ENCODE measurements at regions of chr1 and their contacts with region 1.

Region 1: GRCh38 chr1:145963995-145964901 is at the starts of genes ANKRD34A and POLR3GL:
- DNase-seq: peak; percentile 71 to 94 (median 89)
- ATAC-seq: peak; percentile 96
- H3K4me3 ChIP-seq: peak within 1 kb of the TSS; percentile 87
- H3K4me3 Mint-ChIP-seq: peak within 1 kb of the TSS; percentile 88 to 99 (median 96)
- H3K27ac ChIP-seq: peak within 1 kb of the TSS; percentile 84
- H3K27ac Mint-ChIP-seq: peak within 1 kb of the TSS; percentile 87 to 98 (median 92)
- H3K4me1 ChIP-seq: peaks cover 14 to 31% of the 10 kb centered on the region in 2 donors
- H3K4me1 Mint-ChIP-seq: peaks cover 38 to 62% (median 57%) of the 10 kb centered on the region in 7 donors
- H3K27me3 ChIP-seq: no peaks in the 10 kb centered on the region
- H3K27me3 Mint-ChIP-seq: peaks cover 0 to 4% (median 0%) of the 10 kb centered on the region in 5 donors
- total RNA-seq, gene ANKRD34A: 0.54 to 1.5 (median 1.2) TPM
- total RNA-seq, gene POLR3GL: 20.7 to 37.5 (median 25.5) TPM

Region 2: DNA sequence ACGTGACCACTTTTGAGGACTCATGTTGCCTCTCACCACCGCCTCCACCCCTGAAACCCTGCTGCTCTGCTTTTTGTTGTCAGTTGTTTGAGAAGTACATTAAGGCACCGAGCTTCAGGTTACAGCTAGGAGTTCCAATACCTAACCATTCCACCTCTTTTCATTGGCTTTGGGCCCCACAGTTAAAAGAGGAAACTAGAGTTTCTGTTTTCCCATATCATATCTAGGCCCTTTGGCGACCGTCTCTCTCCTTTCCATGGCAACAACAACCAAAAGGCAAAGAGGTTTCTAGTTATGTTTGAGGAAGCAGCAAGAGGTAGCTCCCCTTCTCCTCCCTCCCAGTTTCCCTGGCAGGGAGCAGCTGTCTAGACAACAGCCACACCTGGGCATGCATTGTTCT is 84.5 kb before region 1 on chr1:
- CTCF ChIA-PET with region 1: no interaction called
- POLR2A ChIA-PET with region 1: no interaction called
- intact Hi-C with region 1: no loop called
- DNase-seq: no peak
- ATAC-seq: no peak
- H3K4me3 ChIP-seq: no peak overlapping the region
- H3K4me3 Mint-ChIP-seq: no peak overlapping the region
- H3K27ac ChIP-seq: no peak overlapping the region
- H3K27ac Mint-ChIP-seq: no peak overlapping the region
- H3K4me1 ChIP-seq: no peaks in the 10 kb centered on the region
- H3K4me1 Mint-ChIP-seq: peaks cover under 1 to 8% (median 3%) of the 10 kb centered on the region in 7 donors
- H3K27me3 ChIP-seq: no peaks in the 10 kb centered on the region
- H3K27me3 Mint-ChIP-seq: peaks cover 6 to 62% (median 17%) of the 10 kb centered on the region in 5 donors

Region 3: GRCh38 chr1:145927063-145927886 is 37.0 kb before region 1 on chr1 and contains the start of gene RBM8A:
- CTCF ChIA-PET with region 1: interaction called, 29 read pairs
- POLR2A ChIA-PET with region 1: interaction called, 137 read pairs
- intact Hi-C with region 1: loop called (anchors 1 kb)
- DNase-seq: peak; percentile 70 to 98 (median 96)
- ATAC-seq: peak; percentile 98
- H3K4me3 ChIP-seq: peak within 1 kb of the TSS; percentile 98
- H3K4me3 Mint-ChIP-seq: peak within 1 kb of the TSS in 4 of 10 donors; percentile 48 to 85 (median 75)
- H3K27ac ChIP-seq: peak within 1 kb of the TSS; percentile 100
- H3K27ac Mint-ChIP-seq: peak within 1 kb of the TSS in 3 of 9 donors; percentile 56 to 95 (median 94)
- H3K4me1 ChIP-seq: peaks cover 26 to 28% of the 10 kb centered on the region in 2 donors
- H3K4me1 Mint-ChIP-seq: peaks cover 11 to 33% (median 23%) of the 10 kb centered on the region in 7 donors
- H3K27me3 ChIP-seq: no peaks in the 10 kb centered on the region
- H3K27me3 Mint-ChIP-seq: no peaks in the 10 kb centered on the region
- total RNA-seq, gene RBM8A: 115 to 182 (median 120) TPM

Region 4: DNA sequence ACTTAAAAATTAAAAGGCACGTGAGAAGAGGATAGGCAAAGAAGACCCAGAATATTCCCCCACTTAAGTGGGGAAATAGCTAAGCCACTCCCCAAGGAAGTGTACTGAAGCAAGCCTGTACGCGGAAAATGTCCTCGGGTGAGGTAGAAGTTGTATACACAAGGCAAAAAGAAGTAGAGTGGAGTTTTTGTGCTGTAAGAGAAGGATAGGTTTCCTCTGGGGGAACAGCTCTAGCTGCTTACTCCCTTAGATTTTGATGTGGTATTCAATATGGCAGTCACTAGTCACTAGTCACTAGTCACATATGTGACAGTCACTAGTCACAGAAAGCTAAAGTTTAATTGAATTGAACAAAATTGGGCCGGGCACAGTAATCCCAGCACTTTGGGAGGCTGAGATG is 24.5 kb after region 1 on chr1:
- CTCF ChIA-PET with region 1: interaction called, 4 read pairs
- POLR2A ChIA-PET with region 1: interaction called, 164 read pairs
- intact Hi-C with region 1: no loop called
- DNase-seq: peak in 5 of 9 donors; percentile 47 to 61 (median 55)
- ATAC-seq: peak; percentile 78
- H3K4me3 ChIP-seq: no peak overlapping the region
- H3K4me3 Mint-ChIP-seq: peak overlapping the region; percentile 3 to 81 (median 47)
- H3K27ac ChIP-seq: peak overlapping the region; percentile 30
- H3K27ac Mint-ChIP-seq: peak overlapping the region in 8 of 9 donors; percentile 45 to 96 (median 80)
- H3K4me1 ChIP-seq: peaks cover 29 to 66% of the 10 kb centered on the region in 2 donors
- H3K4me1 Mint-ChIP-seq: peaks cover 60 to 71% (median 66%) of the 10 kb centered on the region in 7 donors
- H3K27me3 ChIP-seq: no peaks in the 10 kb centered on the region
- H3K27me3 Mint-ChIP-seq: no peaks in the 10 kb centered on the region

Region 5: DNA sequence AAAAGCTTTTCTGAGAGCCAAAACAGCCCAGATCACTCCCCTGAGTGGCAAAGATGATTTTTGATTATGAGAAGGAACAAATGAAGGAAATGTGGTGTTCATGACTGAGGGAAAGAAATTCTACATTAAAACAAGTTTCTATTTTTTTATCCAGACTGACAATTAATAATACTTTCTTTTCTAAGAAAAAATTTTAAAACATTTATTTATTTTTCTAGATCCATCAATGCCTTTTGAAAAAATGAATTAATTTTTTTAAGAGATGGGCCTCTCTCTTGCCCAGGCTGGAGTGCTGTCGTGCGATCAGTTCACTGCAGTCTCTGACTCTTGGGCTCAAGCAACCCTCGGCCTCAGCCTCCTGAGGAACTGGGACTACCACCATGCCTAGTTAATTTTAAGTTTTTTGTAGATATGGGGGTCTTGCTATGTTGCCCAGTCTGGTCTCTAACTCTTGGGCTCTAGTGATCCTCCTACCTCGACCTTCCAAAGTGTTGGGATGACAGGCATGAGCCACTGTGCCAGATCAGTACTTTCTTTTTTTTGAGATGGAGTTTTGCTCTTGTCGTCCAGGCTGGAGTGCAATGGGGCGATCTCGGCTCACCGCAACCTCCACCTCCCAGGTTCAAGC is 43.4 kb after region 1 on chr1:
- CTCF ChIA-PET with region 1: interaction called, 12 read pairs
- POLR2A ChIA-PET with region 1: interaction called, 12 read pairs
- intact Hi-C with region 1: no loop called
- DNase-seq: peak in 1 of 9 donors; percentile 31
- ATAC-seq: no peak
- H3K4me3 ChIP-seq: no peak overlapping the region
- H3K4me3 Mint-ChIP-seq: peak overlapping the region in 9 of 10 donors; percentile 73 to 93 (median 83)
- H3K27ac ChIP-seq: peak overlapping the region; percentile 64
- H3K27ac Mint-ChIP-seq: peak overlapping the region; percentile 86 to 97 (median 93)
- H3K4me1 ChIP-seq: peaks cover 18 to 36% of the 10 kb centered on the region in 2 donors
- H3K4me1 Mint-ChIP-seq: peaks cover 31 to 56% (median 45%) of the 10 kb centered on the region in 7 donors
- H3K27me3 ChIP-seq: no peaks in the 10 kb centered on the region
- H3K27me3 Mint-ChIP-seq: no peaks in the 10 kb centered on the region

Region 6: GRCh38 chr1:146036965-146037646 is 72.9 kb after region 1 on chr1:
- CTCF ChIA-PET with region 1: interaction called, 3 read pairs
- POLR2A ChIA-PET with region 1: interaction called, 28 read pairs
- intact Hi-C with region 1: no loop called
- DNase-seq: peak; percentile 52 to 88 (median 83)
- ATAC-seq: peak; percentile 66
- H3K4me3 ChIP-seq: peak overlapping the region; percentile 87
- H3K4me3 Mint-ChIP-seq: peak overlapping the region; percentile 95 to 99 (median 97)
- H3K27ac ChIP-seq: peak overlapping the region; percentile 69
- H3K27ac Mint-ChIP-seq: peak overlapping the region; percentile 93 to 100 (median 98)
- H3K4me1 ChIP-seq: peaks cover 0 to 6% of the 10 kb centered on the region in 2 donors
- H3K4me1 Mint-ChIP-seq: peaks cover 7 to 49% (median 39%) of the 10 kb centered on the region in 7 donors
- H3K27me3 ChIP-seq: no peaks in the 10 kb centered on the region
- H3K27me3 Mint-ChIP-seq: peaks cover 0 to 32% (median 0%) of the 10 kb centered on the region in 5 donors

Measured in naive thymus-derived CD4-positive, alpha-beta T cell (primary cell).